ENCODE measurements at regions of chr16 and their contacts with region 1.

Region 1: GRCh38 chr16:78770353-78771091 is 671.1 kb downstream of the WWOX start:
- DNase-seq: peak; percentile 63 to 90 (median 80)
- ATAC-seq: peak; percentile 78
- H3K4me3 ChIP-seq: no peak overlapping the region
- H3K4me3 Mint-ChIP-seq: no peak overlapping the region
- H3K27ac ChIP-seq: peak overlapping the region in 1 of 2 donors; percentile 11
- H3K27ac Mint-ChIP-seq: no peak overlapping the region
- H3K4me1 ChIP-seq: peaks cover 30% of the 10 kb centered on the region
- H3K4me1 Mint-ChIP-seq: peaks cover 21% of the 10 kb centered on the region
- H3K27me3 ChIP-seq: no peaks in the 10 kb centered on the region
- H3K27me3 Mint-ChIP-seq: peaks cover 5% of the 10 kb centered on the region
- CTCF ChIP-seq: peak; percentile 82

Region 2: GRCh38 chr16:78503602-78504001 is 266.9 kb before region 1 on chr16:
- CTCF ChIA-PET with region 1: interaction called, 3 read pairs
- POLR2A ChIA-PET with region 1: no interaction called
- intact Hi-C with region 1: loop called (anchors 1 to 2 kb)
- DNase-seq: peak in 10 of 14 experiments; percentile 4 to 75 (median 30)
- ATAC-seq: no peak
- H3K4me3 ChIP-seq: no peak overlapping the region
- H3K4me3 Mint-ChIP-seq: no peak overlapping the region
- H3K27ac ChIP-seq: no peak overlapping the region
- H3K27ac Mint-ChIP-seq: no peak overlapping the region
- H3K4me1 ChIP-seq: no peaks in the 10 kb centered on the region
- H3K4me1 Mint-ChIP-seq: no peaks in the 10 kb centered on the region
- H3K27me3 ChIP-seq: no peaks in the 10 kb centered on the region
- H3K27me3 Mint-ChIP-seq: no peaks in the 10 kb centered on the region
- CTCF ChIP-seq: peak; percentile 79

Region 3: GRCh38 chr16:78705694-78706093 is 64.8 kb before region 1 on chr16:
- CTCF ChIA-PET with region 1: interaction called, 13 read pairs
- POLR2A ChIA-PET with region 1: interaction called, 3 read pairs
- intact Hi-C with region 1: loop called (anchors 1 to 2 kb)
- DNase-seq: peak in 4 of 14 experiments; percentile 13 to 65 (median 60)
- ATAC-seq: peak; percentile 58
- H3K4me3 ChIP-seq: no peak overlapping the region
- H3K4me3 Mint-ChIP-seq: no peak overlapping the region
- H3K27ac ChIP-seq: no peak overlapping the region
- H3K27ac Mint-ChIP-seq: no peak overlapping the region
- H3K4me1 ChIP-seq: no peaks in the 10 kb centered on the region
- H3K4me1 Mint-ChIP-seq: no peaks in the 10 kb centered on the region
- H3K27me3 ChIP-seq: no peaks in the 10 kb centered on the region
- H3K27me3 Mint-ChIP-seq: no peaks in the 10 kb centered on the region
- CTCF ChIP-seq: peak; percentile 50

Region 4: DNA sequence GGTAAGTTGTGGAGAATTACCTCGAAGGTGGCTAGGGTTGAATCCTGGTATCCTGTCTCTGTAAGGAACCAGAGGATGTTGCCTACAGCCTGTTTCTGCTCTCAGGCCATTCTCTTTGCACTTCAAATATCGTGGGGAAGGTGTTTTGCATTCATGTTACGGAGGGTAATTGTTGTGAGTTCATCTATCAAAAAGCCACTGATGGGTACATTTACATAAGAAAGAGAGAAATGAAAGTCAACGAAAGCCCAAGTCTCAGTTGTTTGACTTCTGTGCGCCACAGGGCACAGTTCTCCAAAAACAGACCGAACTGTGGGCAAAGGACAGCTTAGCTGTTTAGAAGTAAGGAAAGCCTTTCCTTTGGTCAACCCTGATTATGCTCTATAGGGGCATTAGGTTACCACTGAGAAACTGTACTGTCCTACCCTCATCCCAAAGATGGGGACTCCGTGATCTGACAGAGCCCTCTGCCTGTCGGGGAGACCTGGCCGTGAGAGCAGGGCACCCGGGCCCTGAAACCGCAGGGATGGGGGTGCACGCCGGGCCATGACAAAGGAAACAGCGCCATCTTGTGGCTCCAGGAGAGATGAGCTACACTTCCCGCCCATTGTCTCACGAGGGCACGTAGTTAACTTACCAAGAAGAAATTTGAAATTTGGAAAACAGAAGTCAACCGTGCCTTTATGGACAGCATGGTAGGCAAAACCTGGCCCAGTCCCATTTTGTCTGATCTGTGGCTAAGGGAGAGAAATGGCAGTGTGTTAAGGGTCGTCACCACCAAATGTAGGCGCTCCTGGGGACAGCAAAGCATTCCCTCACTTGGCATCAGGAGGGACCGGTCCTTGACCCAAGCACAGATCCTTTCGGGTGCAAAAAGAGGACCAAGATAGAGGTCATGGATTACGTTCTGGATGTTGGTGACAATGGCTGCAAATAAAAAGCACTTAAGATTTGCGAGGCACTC is 1695.8 kb after region 1 on chr16:
- CTCF ChIA-PET with region 1: no interaction called
- POLR2A ChIA-PET with region 1: no interaction called
- intact Hi-C with region 1: loop called in 1 of 2 experiments (anchors 5 kb)
- DNase-seq: peak; percentile 33 to 80 (median 44)
- ATAC-seq: peak; percentile 66
- H3K4me3 ChIP-seq: no peak overlapping the region
- H3K4me3 Mint-ChIP-seq: no peak overlapping the region
- H3K27ac ChIP-seq: no peak overlapping the region
- H3K27ac Mint-ChIP-seq: no peak overlapping the region
- H3K4me1 ChIP-seq: peaks cover 5% of the 10 kb centered on the region
- H3K4me1 Mint-ChIP-seq: no peaks in the 10 kb centered on the region
- H3K27me3 ChIP-seq: peaks cover 0 to 10% of the 10 kb centered on the region in 2 experiments
- H3K27me3 Mint-ChIP-seq: peaks cover 21% of the 10 kb centered on the region
- CTCF ChIP-seq: peak; percentile 67

Measured in CD4-positive, alpha-beta T cell (primary cell).